Esophagus squamous epithelium (tissue), 5 donors: ENCODE measurements at regions of chr11 and their contacts with region 1.

Region 1: DNA sequence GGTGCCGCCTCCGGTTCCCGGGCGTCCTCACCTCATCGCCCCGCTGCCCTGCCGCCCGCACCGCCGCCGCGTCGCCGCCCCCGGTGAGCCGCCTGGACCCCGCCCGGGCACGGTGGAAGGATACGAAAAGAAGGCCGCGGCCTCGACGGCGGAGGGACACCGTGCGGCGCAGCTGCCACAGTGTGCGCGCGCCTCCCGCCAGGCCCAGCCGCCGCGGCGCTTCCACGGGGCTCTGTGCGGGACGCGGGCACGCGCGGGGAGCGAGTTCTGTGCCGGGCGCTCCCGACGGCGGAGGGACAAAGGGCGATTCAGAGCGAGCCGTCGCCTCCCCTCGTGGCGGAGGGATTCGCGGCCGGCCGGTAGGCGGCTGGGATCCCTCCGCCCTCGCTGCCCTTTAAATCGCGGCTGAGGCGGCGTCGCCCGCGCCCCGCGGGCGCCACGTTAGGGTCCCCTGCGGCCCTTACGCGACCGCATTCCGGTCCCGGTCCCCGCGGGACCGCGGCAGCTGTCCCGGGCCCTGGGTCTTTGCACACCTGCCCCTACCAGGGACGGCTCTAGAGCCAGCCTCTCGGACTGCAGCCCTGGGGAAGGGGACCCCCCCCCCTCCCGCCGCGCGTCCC is 569 bp upstream of the KMT5B start:
- DNase-seq: peak; percentile 50
- H3K4me3 ChIP-seq: peak overlapping the region; percentile 79 to 93 (median 92)
- H3K27ac ChIP-seq: peak overlapping the region; percentile 97 to 100 (median 98)
- H3K4me1 ChIP-seq: peaks cover 41 to 68% (median 44%) of the 10 kb centered on the region in 3 donors
- H3K27me3 ChIP-seq: no peaks in the 10 kb centered on the region
- CTCF ChIP-seq: peak in 3 of 6 experiments; percentile 30 to 60 (median 43)
- POLR2A ChIP-seq: peak in 2 of 4 donors; percentile 94 to 95

Region 2: GRCh38 chr11:68003846-68004550 is 209.7 kb before region 1 on chr11 and contains the start of gene UNC93B1:
- intact Hi-C with region 1: loop called (anchors 10 kb)
- DNase-seq: peak; percentile 74
- H3K4me3 ChIP-seq: peak within 1 kb of the TSS; percentile 60 to 94 (median 81)
- H3K27ac ChIP-seq: peak within 1 kb of the TSS; percentile 43 to 91 (median 85)
- H3K4me1 ChIP-seq: peaks cover 10 to 41% (median 22%) of the 10 kb centered on the region in 3 donors
- H3K27me3 ChIP-seq: no peaks in the 10 kb centered on the region
- CTCF ChIP-seq: peak in 1 of 6 experiments; percentile 5
- POLR2A ChIP-seq: peak in 3 of 4 donors; percentile 50 to 80 (median 72)
- total RNA-seq, gene UNC93B1: 13.5 to 38.0 (median 31.5) TPM

Region 3: GRCh38 chr11:68090706-68091105 is 123.0 kb before region 1 on chr11:
- intact Hi-C with region 1: no loop called
- DNase-seq: no peak
- H3K4me3 ChIP-seq: no peak overlapping the region
- H3K27ac ChIP-seq: no peak overlapping the region
- H3K4me1 ChIP-seq: no peaks in the 10 kb centered on the region
- H3K27me3 ChIP-seq: no peaks in the 10 kb centered on the region
- CTCF ChIP-seq: no peak
- POLR2A ChIP-seq: no peak

Region 4: GRCh38 chr11:68480852-68481510 is 267.3 kb after region 1 on chr11:
- intact Hi-C with region 1: no loop called
- DNase-seq: no peak
- H3K4me3 ChIP-seq: peak overlapping the region in 1 of 4 donors; percentile 0
- H3K27ac ChIP-seq: peak overlapping the region; percentile 1 to 59 (median 46)
- H3K4me1 ChIP-seq: peaks cover 0 to 52% (median 18%) of the 10 kb centered on the region in 3 donors
- H3K27me3 ChIP-seq: no peaks in the 10 kb centered on the region
- CTCF ChIP-seq: no peak
- POLR2A ChIP-seq: no peak